ENCODE measurements at regions of chr9 and their contacts with region 1.

Region 1: DNA sequence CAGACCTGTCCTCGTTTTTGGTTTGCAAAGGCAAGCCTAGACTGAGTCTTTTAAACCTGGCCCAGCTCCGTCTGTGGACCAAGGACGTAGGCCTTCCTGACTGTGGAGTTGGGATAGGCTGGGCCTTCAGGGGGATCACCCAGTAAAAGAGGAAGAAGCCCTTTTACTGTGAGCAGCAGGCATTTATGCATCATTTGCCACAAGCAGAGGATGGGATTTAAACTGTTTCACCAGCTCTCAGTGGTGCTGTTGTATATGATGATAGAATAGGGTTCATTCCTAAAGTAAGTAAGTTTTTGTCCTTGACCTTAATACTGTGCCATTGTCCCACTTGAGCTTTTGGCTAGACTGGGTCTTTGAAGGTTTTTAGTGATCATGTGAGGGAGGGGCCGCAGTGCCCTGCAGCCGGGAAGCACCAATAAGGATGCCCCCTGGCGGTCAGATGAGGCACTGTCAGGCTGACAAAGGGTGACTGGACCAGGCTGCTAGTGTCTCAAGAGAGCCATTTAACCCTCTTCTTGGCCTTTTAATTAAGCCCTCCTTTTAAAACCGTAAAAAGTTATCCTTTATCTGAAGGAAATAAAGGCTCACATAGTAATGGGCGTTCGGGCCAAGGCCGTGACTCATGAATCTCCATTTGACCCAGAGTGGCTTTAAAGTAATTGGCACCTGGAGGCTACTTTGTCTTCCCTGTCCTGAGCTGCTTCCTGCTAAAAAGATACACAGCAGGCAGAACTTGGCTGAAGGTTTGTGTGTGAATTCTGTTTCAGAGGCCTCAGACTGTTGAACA is 74.0 kb downstream of the UBAP1 start:
- DNase-seq: peak; percentile 68
- ATAC-seq: peak; percentile 39
- H3K4me3 ChIP-seq: no peak overlapping the region
- H3K27ac ChIP-seq: peak overlapping the region; percentile 83
- H3K4me1 ChIP-seq: peaks cover 29% of the 10 kb centered on the region
- H3K27me3 ChIP-seq: no peaks in the 10 kb centered on the region
- CTCF ChIP-seq: peak; percentile 88

Region 2: GRCh38 chr9:34072868-34073590 is 179.8 kb before region 1 on chr9:
- CTCF ChIA-PET with region 1: interaction called, 7 read pairs
- POLR2A ChIA-PET with region 1: no interaction called
- intact Hi-C with region 1: loop called (anchors 2 kb)
- DNase-seq: peak; percentile 84
- ATAC-seq: peak; percentile 90
- H3K4me3 ChIP-seq: no peak overlapping the region
- H3K27ac ChIP-seq: peak overlapping the region; percentile 9; the same call in 1 of the 2 replicates
- H3K4me1 ChIP-seq: peaks cover 26% of the 10 kb centered on the region
- H3K27me3 ChIP-seq: no peaks in the 10 kb centered on the region
- CTCF ChIP-seq: no peak

Region 3: DNA sequence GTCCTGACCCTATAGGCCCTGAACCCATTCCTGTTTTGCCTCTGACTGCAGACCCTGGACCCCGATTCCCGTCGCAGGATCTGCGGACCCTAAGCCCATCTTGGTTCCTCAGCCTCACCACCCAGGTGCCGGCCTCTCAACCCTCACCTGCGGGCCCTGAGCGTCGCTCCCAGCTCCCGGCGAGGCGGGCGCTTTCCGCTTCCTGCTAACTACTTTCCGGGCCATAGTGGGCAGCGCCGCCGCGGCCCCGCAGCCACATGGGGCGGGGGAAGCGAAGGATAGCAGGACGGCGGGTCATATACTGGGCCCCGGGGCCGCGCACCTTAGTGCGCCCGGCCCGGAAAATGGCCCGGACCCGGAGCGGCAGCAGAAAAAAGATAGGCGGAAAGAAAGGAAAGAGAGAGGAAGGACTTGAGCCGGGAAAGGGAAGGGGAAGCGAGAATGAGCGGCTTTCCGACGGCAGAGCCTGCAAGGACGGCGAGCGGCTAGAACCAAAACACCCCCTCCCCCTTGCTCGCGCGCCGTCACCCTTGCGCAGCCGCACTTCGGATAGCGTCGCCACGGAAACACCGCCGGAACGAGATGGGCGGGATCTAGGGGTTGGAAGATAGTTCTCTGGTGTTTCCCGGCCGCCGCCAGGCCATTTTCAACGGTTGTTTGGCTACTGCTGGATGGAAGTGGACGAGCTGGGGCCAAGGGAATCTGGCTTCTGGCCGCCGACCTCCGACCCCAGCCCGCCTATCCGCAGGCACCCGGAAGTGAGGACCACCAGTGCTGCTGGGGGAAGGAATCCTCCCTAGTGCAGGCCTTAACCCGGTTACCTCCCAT is 126.4 kb before region 1 on chr9 and contains the start of gene DCAF12:
- CTCF ChIA-PET with region 1: interaction called, 3 read pairs
- POLR2A ChIA-PET with region 1: no interaction called
- intact Hi-C with region 1: loop called (anchors 1 kb)
- DNase-seq: peak; percentile 86
- ATAC-seq: peak; percentile 86
- H3K4me3 ChIP-seq: peak within 1 kb of the TSS; percentile 78
- H3K27ac ChIP-seq: peak within 1 kb of the TSS; percentile 64
- H3K4me1 ChIP-seq: peaks cover 14% of the 10 kb centered on the region
- H3K27me3 ChIP-seq: no peaks in the 10 kb centered on the region
- CTCF ChIP-seq: no peak
- total RNA-seq, gene DCAF12: 12.9 and 16.1 TPM in 2 replicates

Region 4: DNA sequence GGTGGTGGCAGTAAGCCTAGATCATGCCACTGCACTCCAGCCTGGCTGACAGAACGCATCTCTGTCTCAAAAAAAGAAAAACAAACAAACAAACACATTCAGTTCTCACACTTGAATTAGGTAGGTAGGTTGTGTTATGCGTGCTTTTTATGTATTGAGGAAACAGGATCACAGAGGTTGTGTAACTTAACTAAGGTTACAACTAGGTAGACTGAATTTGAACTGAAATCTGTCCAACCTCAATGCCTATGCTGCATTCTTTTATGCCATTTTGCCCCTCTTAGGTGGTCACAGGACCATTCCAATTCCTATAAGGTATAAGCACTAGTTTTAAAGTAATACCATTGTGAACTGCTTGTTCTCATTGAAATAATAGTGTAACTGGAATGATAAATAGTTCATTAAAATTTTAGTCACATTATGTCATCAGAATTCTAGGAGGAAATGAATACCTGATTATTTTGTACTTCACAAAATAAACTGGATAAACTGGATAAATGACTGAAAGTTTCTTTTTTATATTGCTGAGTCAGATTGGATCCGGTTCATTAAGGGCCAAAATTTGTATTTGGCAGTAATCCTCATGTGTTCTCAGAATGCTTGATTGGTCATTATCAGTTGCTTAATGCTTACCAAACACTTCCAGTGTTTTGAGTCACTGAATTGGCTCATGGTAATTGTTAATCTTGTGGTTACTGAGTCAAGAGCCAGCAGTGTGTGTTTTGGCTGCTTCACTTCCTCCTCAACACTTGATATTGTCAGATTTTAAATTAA is 66.9 kb before region 1 on chr9:
- CTCF ChIA-PET with region 1: no interaction called
- POLR2A ChIA-PET with region 1: no interaction called
- intact Hi-C with region 1: loop called (anchors 5 kb)
- DNase-seq: peak; percentile 93
- ATAC-seq: peak; percentile 93
- H3K4me3 ChIP-seq: peak overlapping the region; percentile 40; the same call in 1 of the 2 replicates
- H3K27ac ChIP-seq: peak overlapping the region; percentile 95
- H3K4me1 ChIP-seq: peaks cover 18% of the 10 kb centered on the region
- H3K27me3 ChIP-seq: no peaks in the 10 kb centered on the region
- CTCF ChIP-seq: no peak

Region 5: GRCh38 chr9:34233672-34234071 is 19.2 kb before region 1 on chr9:
- CTCF ChIA-PET with region 1: no interaction called
- POLR2A ChIA-PET with region 1: no interaction called
- intact Hi-C with region 1: no loop called
- DNase-seq: no peak
- ATAC-seq: peak; percentile 50
- H3K4me3 ChIP-seq: no peak overlapping the region
- H3K27ac ChIP-seq: no peak overlapping the region
- H3K4me1 ChIP-seq: no peaks in the 10 kb centered on the region
- H3K27me3 ChIP-seq: no peaks in the 10 kb centered on the region
- CTCF ChIP-seq: no peak

Region 6: DNA sequence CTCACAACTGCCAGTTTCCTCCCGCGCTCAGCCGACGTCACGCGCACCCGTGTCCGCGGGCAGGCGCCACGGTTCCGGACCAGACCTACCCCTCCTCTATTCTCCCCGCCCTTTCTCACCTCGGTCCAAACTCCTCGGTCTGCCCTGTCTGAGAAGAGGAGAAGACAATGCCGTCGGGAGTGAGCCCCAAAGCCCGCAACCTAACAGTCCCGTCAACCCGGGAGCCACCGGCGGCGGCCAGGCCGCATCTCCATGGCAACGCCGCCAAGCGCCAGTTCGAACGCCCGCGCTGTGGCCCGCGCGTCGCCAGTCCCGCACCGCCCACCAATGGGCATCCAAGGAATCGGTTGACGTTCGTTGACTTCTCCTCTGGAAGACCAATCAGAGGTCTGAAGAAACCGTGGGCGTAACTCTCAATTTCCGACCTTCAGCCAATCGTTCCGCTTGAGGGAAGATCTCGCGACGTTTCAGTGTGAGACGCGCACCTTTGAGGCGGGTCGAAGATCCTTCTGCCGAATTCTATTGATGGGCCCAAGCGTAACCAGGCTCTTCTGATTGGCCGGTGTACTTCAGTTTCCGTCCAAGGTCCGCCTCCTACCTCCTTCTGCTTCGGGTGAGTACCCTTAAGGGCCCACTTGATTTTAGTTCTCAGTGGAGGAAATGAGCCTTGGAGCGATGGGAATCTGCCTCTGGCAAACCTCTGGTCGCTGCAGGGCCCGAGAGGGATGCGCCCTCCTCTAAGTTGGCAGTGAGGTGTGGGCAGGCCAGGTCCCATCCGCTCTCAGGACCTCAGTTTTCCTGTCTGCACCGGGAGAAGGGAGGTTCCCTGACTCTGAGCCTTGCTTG is 76.3 kb after region 1 on chr9 and contains the starts of genes KIF24 and NUDT2:
- CTCF ChIA-PET with region 1: no interaction called
- POLR2A ChIA-PET with region 1: no interaction called
- intact Hi-C with region 1: loop called (anchors 5 kb)
- DNase-seq: peak; percentile 99
- ATAC-seq: peak; percentile 94
- H3K4me3 ChIP-seq: peak within 1 kb of the TSS; percentile 89
- H3K27ac ChIP-seq: peak within 1 kb of the TSS; percentile 52
- H3K4me1 ChIP-seq: peaks cover 17% of the 10 kb centered on the region; the same call in 1 of the 2 replicates
- H3K27me3 ChIP-seq: no peaks in the 10 kb centered on the region
- CTCF ChIP-seq: no peak
- total RNA-seq, gene KIF24: 4.7 and 5.0 TPM in 2 replicates
- total RNA-seq, gene NUDT2: 34.4 and 34.6 TPM in 2 replicates

Region 7: DNA sequence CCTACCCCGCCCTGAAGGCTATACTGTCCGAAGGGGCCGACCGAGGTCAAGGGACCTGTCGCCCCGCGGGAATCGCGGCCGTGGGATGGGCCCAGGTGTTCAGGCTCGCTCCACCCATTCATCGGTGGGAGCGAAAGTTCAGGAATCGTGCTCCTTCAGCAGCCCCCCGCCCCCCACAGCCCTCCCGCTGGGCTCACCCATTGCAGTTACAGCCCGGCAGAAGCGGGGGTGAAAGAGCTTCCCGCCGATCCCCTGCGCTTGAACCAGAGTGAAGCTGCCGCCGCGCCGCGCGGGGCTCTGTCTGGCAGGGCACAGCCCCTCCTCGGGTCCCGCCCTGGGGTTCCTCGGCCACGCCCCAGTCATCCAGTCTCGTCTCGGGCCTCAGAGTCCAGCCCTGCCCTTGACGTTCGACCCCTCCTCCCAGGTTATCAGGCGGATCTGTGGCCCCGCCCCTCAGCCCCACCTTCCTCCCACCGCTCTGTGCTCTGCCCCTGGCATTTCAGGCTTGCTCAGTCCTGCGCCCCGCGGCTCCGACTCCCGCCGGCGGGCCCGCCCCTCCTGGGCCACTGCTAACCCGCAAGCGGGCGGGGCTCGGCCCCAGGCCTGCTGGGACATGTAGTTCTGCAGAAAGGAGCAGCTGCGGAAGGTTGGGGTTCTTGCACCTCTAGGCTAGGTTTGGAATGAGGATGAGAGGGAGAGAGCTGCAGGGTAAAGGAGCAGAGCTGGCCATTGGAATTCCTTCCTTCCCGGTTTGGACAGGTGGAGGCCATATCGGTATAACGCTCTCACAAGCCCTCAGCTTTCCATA is 123.9 kb after region 1 on chr9 and contains the start of gene MYORG:
- CTCF ChIA-PET with region 1: interaction called, 3 read pairs
- POLR2A ChIA-PET with region 1: no interaction called
- intact Hi-C with region 1: loop called (anchors 2 kb)
- DNase-seq: peak; percentile 93
- ATAC-seq: peak; percentile 79
- H3K4me3 ChIP-seq: peak within 1 kb of the TSS; percentile 82
- H3K27ac ChIP-seq: no peak within 1 kb of the TSS
- H3K4me1 ChIP-seq: peaks cover 14% of the 10 kb centered on the region
- H3K27me3 ChIP-seq: no peaks in the 10 kb centered on the region
- CTCF ChIP-seq: no peak
- total RNA-seq, gene MYORG: 3.4 and 4.7 TPM in 2 replicates

Measured in PC-3 (cell line).